ENCODE measurements at regions of chr2 and their contacts with region 1.

Region 1: DNA sequence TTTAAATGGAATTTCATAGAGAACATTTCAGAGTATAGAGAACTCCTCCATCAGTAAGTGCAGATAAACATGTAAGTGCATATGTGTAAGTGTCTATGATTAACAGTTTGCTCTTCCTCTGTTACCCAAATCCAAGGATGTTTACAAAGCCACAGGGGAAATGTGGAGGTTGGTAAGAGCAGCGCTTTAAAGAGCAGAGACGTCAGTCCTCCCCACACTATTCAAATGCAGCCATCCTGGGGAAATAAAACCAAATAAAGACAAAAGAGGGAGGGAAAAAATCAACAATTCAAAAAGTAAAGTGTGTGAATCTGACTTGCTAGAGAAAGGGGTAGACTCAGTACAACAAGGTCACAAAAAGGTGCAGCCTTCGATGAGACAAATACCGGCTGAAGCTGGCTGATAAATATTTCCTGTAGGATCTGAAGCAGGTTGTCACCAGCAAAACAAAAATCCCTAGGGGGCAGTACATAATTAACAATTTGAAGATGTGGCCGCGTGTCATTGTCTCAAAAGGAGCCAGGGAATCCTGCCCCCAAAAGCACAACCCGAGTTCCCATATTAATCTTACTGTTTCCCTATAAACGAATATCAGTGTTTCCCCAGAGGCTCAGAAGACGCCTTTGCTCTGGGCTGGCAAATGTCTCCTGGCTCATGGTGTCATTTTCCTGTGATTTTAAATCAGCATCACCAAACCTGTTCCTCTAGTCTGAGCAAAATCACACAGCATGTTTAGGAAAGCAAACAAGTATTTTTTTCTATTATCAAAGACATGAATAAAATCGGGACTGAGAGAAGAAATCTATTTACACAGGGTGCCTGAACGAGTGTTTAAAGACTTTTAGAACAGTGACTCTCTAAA is 216.6 kb downstream of the CDCA7 start:
- DNase-seq: peak in 2 of 4 experiments; percentile 34 to 36
- ATAC-seq: peak; percentile 76
- H3K4me3 ChIP-seq: no peak overlapping the region
- H3K27ac ChIP-seq: no peak overlapping the region
- H3K4me1 ChIP-seq: no peaks in the 10 kb centered on the region
- H3K27me3 ChIP-seq: 0 out of 5 replicates have a peak, but pooled peaks cover 0 to under 1% of the 10 kb centered on the region in 2 experiments
- CTCF ChIP-seq: peak; percentile 36 to 64 (median 40); a peak in 5 of 6 replicates
- EP300 ChIP-seq: no peak
- POLR2A ChIP-seq: no peak
- RAD21 ChIP-seq: peak; percentile 50 to 64

Region 2: GRCh38 chr2:173402405-173402974 is 168.8 kb before region 1 on chr2:
- CTCF ChIA-PET with region 1: interaction called, 11 read pairs
- POLR2A ChIA-PET with region 1: no interaction called
- in situ Hi-C with region 1: no loop called
- intact Hi-C with region 1: loop called (anchors 1 kb)
- DNase-seq: peak; percentile 71 to 88 (median 80)
- ATAC-seq: peak; percentile 98
- H3K4me3 ChIP-seq: no peak overlapping the region
- H3K27ac ChIP-seq: no peak overlapping the region
- H3K4me1 ChIP-seq: no peaks in the 10 kb centered on the region
- H3K27me3 ChIP-seq: peaks cover 29 to 40% of the 10 kb centered on the region in 2 experiments
- CTCF ChIP-seq: peak; percentile 93 to 96 (median 94)
- EP300 ChIP-seq: no peak
- POLR2A ChIP-seq: no peak
- RAD21 ChIP-seq: peak; percentile 94 to 98

Region 3: DNA sequence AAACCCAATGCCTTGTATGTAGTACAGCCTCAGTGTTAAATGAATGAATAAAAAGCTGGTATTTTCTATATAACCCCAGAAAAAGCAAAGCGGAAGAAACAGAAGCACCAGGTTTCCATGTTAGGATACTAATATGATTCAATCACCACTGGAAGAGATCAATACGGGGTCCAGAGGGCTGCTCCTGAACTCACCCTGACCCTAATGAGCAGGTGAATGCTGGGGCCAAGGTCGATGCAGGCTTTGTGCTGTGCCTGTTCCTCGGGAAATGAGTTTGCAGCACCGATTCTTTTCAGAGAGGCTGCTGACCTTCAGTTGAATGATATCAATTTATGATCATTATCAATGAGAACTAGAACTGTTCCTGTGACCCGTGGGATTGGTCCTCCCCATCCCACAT is 11.9 kb after region 1 on chr2:
- CTCF ChIA-PET with region 1: no interaction called
- POLR2A ChIA-PET with region 1: no interaction called
- in situ Hi-C with region 1: no loop called
- intact Hi-C with region 1: no loop called
- DNase-seq: no peak
- ATAC-seq: no peak
- H3K4me3 ChIP-seq: no peak overlapping the region
- H3K27ac ChIP-seq: no peak overlapping the region
- H3K4me1 ChIP-seq: no peaks in the 10 kb centered on the region
- H3K27me3 ChIP-seq: 0 out of 5 replicates have a peak, but pooled peaks cover 0 to 3% of the 10 kb centered on the region in 2 experiments
- CTCF ChIP-seq: no peak
- EP300 ChIP-seq: no peak
- POLR2A ChIP-seq: no peak
- RAD21 ChIP-seq: no peak

Region 4: GRCh38 chr2:173696274-173696673 is 125.0 kb after region 1 on chr2:
- CTCF ChIA-PET with region 1: no interaction called
- POLR2A ChIA-PET with region 1: no interaction called
- in situ Hi-C with region 1: no loop called
- intact Hi-C with region 1: no loop called
- DNase-seq: no peak
- ATAC-seq: no peak
- H3K4me3 ChIP-seq: no peak overlapping the region
- H3K27ac ChIP-seq: no peak overlapping the region
- H3K4me1 ChIP-seq: no peaks in the 10 kb centered on the region
- H3K27me3 ChIP-seq: no peaks in the 10 kb centered on the region; a peak in 1 of 5 replicates
- CTCF ChIP-seq: no peak
- EP300 ChIP-seq: no peak
- POLR2A ChIP-seq: no peak
- RAD21 ChIP-seq: no peak

Region 5: GRCh38 chr2:173749315-173749714 is 178.1 kb after region 1 on chr2:
- CTCF ChIA-PET with region 1: no interaction called
- POLR2A ChIA-PET with region 1: no interaction called
- in situ Hi-C with region 1: no loop called
- intact Hi-C with region 1: loop called (anchors 5 kb)
- DNase-seq: no peak
- ATAC-seq: no peak
- H3K4me3 ChIP-seq: no peak overlapping the region
- H3K27ac ChIP-seq: no peak overlapping the region
- H3K4me1 ChIP-seq: no peaks in the 10 kb centered on the region
- H3K27me3 ChIP-seq: peaks cover 15 to 27% of the 10 kb centered on the region in 2 experiments
- CTCF ChIP-seq: peak in 2 of 3 experiments; percentile 16 to 35; a peak in 2 of 6 replicates
- EP300 ChIP-seq: no peak
- POLR2A ChIP-seq: no peak
- RAD21 ChIP-seq: peak; percentile 8 to 39; a peak in 2 of 4 replicates

Region 6: GRCh38 chr2:173815772-173816171 is 244.5 kb after region 1 on chr2:
- CTCF ChIA-PET with region 1: no interaction called
- POLR2A ChIA-PET with region 1: no interaction called
- in situ Hi-C with region 1: no loop called
- intact Hi-C with region 1: loop called (anchors 5 kb)
- DNase-seq: peak; percentile 23 to 64 (median 42)
- ATAC-seq: peak; percentile 83
- H3K4me3 ChIP-seq: no peak overlapping the region
- H3K27ac ChIP-seq: no peak overlapping the region
- H3K4me1 ChIP-seq: peaks cover 0 to 18% of the 10 kb centered on the region in 2 experiments; a peak in 3 of 5 replicates
- H3K27me3 ChIP-seq: peaks cover 11 to 13% of the 10 kb centered on the region in 2 experiments; a peak in 4 of 5 replicates
- CTCF ChIP-seq: peak in 2 of 3 experiments; percentile 13 to 39; a peak in 2 of 6 replicates
- EP300 ChIP-seq: peak; percentile 72
- POLR2A ChIP-seq: no peak
- RAD21 ChIP-seq: peak; percentile 45 to 60

Measured in K562 (cell line).